ENCODE measurements at regions of chr9 and their contacts with region 1.

Region 1: GRCh38 chr9:115013998-115014397 is 83.6 kb upstream of the TNFSF8 start:
- DNase-seq: peak; percentile 89
- ATAC-seq: peak; percentile 93
- H3K4me3 Mint-ChIP-seq: no peak overlapping the region
- H3K27ac Mint-ChIP-seq: peak overlapping the region; percentile 70
- H3K4me1 Mint-ChIP-seq: peaks cover 48% of the 10 kb centered on the region
- H3K27me3 Mint-ChIP-seq: no peaks in the 10 kb centered on the region

Region 2: DNA sequence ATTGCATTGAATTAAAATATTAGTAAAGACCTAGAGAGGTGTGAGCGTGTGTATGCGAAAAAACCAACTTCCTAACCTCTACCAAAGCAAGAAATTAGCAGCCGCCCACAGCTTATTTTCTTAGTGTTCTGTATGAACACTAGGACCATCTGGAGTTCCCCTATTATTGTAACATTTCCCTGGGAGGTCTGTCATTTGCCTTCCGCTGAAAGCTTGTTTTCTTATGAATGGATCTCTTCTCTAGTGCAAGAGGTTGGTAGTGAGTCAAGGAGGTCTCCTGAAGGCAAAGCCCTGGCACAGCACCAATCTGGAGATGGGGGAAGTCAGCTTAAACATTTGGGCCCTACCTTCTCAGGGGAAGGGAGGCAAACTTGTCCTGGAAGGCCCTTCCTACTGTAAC is 94.4 kb before region 1 on chr9:
- CTCF ChIA-PET with region 1: interaction called, 18 read pairs
- POLR2A ChIA-PET with region 1: no interaction called
- DNase-seq: no peak
- ATAC-seq: no peak
- H3K4me3 Mint-ChIP-seq: no peak overlapping the region
- H3K27ac Mint-ChIP-seq: peak overlapping the region; percentile 35
- H3K4me1 Mint-ChIP-seq: peaks cover 86% of the 10 kb centered on the region
- H3K27me3 Mint-ChIP-seq: no peaks in the 10 kb centered on the region

Region 3: DNA sequence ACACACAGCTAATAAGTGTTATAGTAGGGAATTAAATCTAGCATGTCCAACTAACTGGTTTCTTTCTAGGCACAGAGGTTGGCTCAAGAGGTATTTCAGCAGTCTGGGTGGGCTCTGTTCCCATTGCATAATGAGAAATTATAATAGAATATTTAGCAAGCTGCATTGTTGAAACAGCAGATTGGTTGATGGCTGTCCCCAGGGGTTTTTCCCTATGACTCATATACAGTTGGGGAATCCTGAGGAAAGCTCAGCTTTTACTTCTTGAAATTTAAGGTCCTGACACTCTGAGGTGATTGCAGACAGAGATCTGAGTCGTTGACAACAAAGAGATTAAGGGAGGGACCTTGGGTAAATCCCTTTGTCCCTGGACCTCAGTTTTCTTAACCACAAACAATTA is 45.3 kb before region 1 on chr9:
- CTCF ChIA-PET with region 1: interaction called, 12 read pairs
- POLR2A ChIA-PET with region 1: no interaction called
- DNase-seq: no peak
- ATAC-seq: peak; percentile 51
- H3K4me3 Mint-ChIP-seq: no peak overlapping the region
- H3K27ac Mint-ChIP-seq: no peak overlapping the region
- H3K4me1 Mint-ChIP-seq: peaks cover 27% of the 10 kb centered on the region
- H3K27me3 Mint-ChIP-seq: no peaks in the 10 kb centered on the region